Activated naive CD4-positive, alpha-beta T cell treated with anti-CD3 and anti-CD28 coated beads, Interleukin-2, amount 10 ng/mL, durations not matched to agents 7 days and 5 days (primary cell): ENCODE measurements at regions of chr17 and their contacts with region 1.

Region 1: DNA sequence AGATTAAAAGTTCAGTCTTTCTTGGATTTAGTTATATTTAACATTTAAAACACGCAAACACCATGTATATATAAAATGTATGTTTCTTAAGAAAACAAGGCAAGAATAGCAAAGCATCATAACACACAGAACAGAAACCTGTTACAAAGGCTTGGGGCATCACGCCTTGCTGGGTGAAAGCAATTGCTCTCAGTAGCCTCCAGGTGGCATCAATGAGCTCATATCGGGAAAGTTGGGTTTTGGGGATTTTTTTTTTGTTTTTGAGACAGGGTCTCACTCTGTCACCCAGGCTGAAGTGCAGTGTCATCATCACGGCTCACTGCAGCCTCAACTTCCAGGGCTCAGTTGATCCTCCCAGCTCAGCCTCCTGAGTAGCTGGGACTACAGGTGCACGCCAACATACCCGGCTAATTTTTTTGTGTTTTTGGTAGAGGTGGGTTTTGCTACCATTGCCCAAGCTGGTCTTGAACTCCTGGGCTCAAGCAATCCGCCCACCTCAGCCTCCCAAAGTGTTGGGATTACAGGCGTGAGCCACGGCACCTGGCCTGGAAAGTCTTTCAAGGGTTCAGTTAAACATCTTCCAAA is 56.9 kb downstream of the CYB5D2 start:
- DNase-seq: peak; percentile 54
- H3K4me3 Mint-ChIP-seq: no peak overlapping the region
- H3K27ac Mint-ChIP-seq: no peak overlapping the region
- H3K4me1 Mint-ChIP-seq: no peaks in the 10 kb centered on the region
- H3K27me3 Mint-ChIP-seq: no peaks in the 10 kb centered on the region

Region 2: GRCh38 chr17:4143563-4144421 is 56.1 kb before region 1 on chr17:
- CTCF ChIA-PET with region 1: no interaction called
- DNase-seq: peak; percentile 93
- H3K4me3 Mint-ChIP-seq: peak overlapping the region; percentile 95
- H3K27ac Mint-ChIP-seq: peak overlapping the region; percentile 100
- H3K4me1 Mint-ChIP-seq: peaks cover 49% of the 10 kb centered on the region
- H3K27me3 Mint-ChIP-seq: no peaks in the 10 kb centered on the region

Region 3: DNA sequence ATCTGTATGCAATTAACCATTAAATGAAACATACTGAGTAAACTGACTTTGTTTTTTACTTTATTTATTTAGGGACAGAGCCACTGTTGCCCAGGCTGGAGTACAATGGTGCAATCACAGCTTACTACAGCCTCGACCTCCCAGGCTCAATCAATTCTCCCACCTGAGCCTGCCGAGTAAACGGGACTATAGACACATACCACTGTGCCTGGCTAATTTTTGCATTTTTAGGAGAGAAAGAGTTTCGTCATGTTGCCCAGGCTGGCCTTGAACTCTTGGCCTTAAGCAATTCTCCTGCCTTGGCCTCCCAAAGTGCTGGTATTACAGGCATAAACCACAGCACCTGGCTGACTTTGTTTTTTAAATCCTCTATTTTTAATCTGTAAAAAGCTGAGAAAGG is 21.3 kb after region 1 on chr17:
- CTCF ChIA-PET with region 1: no interaction called
- DNase-seq: no peak
- H3K4me3 Mint-ChIP-seq: no peak overlapping the region
- H3K27ac Mint-ChIP-seq: no peak overlapping the region
- H3K4me1 Mint-ChIP-seq: no peaks in the 10 kb centered on the region
- H3K27me3 Mint-ChIP-seq: no peaks in the 10 kb centered on the region

Region 4: GRCh38 chr17:4412933-4413831 is 213.3 kb after region 1 on chr17:
- CTCF ChIA-PET with region 1: interaction called, 14 read pairs
- DNase-seq: peak; percentile 95
- H3K4me3 Mint-ChIP-seq: peak overlapping the region; percentile 56
- H3K27ac Mint-ChIP-seq: peak overlapping the region; percentile 14
- H3K4me1 Mint-ChIP-seq: peaks cover 7% of the 10 kb centered on the region
- H3K27me3 Mint-ChIP-seq: peaks cover 5% of the 10 kb centered on the region

Region 5: GRCh38 chr17:4420692-4421131 is 220.8 kb after region 1 on chr17:
- CTCF ChIA-PET with region 1: interaction called, 14 read pairs
- DNase-seq: peak; percentile 75
- H3K4me3 Mint-ChIP-seq: no peak overlapping the region
- H3K27ac Mint-ChIP-seq: no peak overlapping the region
- H3K4me1 Mint-ChIP-seq: peaks cover 5% of the 10 kb centered on the region
- H3K27me3 Mint-ChIP-seq: peaks cover 11% of the 10 kb centered on the region